Aorta (tissue), 5 donors: ENCODE measurements at regions of chr10 and their contacts with region 1.

Region 1: DNA sequence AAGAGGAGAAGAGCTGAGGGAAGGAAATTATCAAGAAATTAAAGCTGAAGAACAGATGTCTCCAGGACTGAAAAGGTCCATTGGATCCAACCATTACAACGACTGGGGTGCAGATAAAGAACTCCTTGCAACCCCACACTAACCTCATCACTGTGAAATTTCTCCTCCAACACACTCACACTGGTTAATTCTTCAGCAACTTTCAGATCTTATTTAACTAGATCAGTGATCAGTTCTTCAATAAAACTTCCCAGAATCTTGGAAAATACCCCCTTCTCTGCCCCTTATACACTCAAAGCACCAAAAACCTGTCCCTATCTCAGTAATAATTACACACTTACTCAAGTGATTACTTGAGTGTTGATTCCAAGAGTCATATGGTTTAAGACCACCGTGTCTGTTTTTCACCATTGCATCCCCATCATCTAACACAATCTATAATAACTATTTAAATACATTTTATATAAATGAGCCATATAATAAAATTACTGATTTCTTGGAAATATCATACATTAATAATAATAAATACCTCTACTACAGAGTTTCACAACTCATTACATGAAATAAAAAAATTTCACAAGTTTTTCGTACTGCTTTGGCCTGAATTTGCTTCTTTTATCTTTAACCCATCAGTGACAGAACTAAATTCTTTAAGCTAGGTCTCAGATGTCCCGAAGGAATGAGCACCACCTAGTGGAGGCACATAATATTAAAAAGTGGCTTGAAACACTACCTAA is 123.7 kb downstream of the MPP7 start:
- DNase-seq: no peak
- ATAC-seq: peak; percentile 84
- H3K4me3 ChIP-seq: no peak overlapping the region
- H3K27ac ChIP-seq: no peak overlapping the region
- H3K4me1 ChIP-seq: no peaks in the 10 kb centered on the region
- H3K27me3 ChIP-seq: no peaks in the 10 kb centered on the region

Region 2: DNA sequence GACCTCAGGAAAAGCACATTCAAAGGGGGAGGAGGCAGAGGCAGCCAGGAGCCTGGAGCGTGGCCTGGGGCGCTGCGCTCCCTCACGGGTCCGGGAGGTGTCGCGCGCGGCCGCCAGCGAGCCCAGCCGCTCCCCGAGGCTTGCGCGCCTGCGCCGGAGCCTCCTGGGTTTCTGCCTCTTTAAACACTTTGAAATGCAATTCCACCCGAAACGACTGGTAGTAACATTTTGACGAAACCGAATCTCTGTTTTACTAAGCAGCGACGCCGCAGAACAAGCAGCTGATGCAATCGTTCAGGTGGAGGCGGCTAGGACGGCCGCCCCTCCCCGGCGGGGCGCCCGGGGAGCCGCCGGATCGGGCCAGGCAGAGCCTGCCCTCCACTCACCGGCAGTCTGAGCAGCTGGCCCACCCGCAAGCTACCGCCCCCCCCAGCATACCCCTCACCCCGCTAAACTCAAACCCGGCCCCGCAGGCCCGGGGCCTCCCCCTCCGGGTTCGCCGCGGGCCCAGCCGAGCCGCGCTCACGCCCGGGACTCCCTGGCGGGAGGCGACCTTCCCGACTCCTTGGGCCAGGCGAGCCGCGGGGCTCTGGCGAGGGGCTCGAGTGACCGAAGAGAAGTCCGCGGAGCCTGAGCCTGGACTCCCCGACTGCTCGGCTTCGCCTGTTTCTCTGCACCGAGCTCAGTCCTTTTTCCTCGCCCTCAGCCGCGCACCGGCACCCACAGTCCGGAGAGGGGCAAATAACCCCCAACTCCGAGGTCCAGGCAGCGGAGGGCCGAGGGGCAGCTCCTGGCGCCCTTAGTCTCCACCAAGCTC is 436.8 kb before region 1 on chr10:
- intact Hi-C with region 1: loop called in 1 of 2 experiments (anchors 1 kb)
- DNase-seq: peak; percentile 86 to 94
- ATAC-seq: peak; percentile 90
- H3K4me3 ChIP-seq: peak overlapping the region; percentile 78 to 81
- H3K27ac ChIP-seq: peak overlapping the region; percentile 87 to 94
- H3K4me1 ChIP-seq: no peaks in the 10 kb centered on the region
- H3K27me3 ChIP-seq: no peaks in the 10 kb centered on the region

Region 3: GRCh38 chr10:27783660-27784059 is 395.5 kb before region 1 on chr10:
- intact Hi-C with region 1: loop called in 1 of 2 experiments (anchors 10 kb)
- DNase-seq: no peak
- ATAC-seq: peak; percentile 15
- H3K4me3 ChIP-seq: no peak overlapping the region
- H3K27ac ChIP-seq: no peak overlapping the region
- H3K4me1 ChIP-seq: peaks cover 3% of the 10 kb centered on the region in 2 donors
- H3K27me3 ChIP-seq: no peaks in the 10 kb centered on the region

Region 4: GRCh38 chr10:28054228-28054837 is 124.8 kb before region 1 on chr10:
- intact Hi-C with region 1: loop called in 1 of 2 experiments (anchors 10 kb)
- DNase-seq: no peak
- ATAC-seq: peak; percentile 64
- H3K4me3 ChIP-seq: no peak overlapping the region
- H3K27ac ChIP-seq: peak overlapping the region in 1 of 2 donors; percentile 50
- H3K4me1 ChIP-seq: peaks cover 0 to 2% of the 10 kb centered on the region in 2 donors
- H3K27me3 ChIP-seq: no peaks in the 10 kb centered on the region

Region 5: DNA sequence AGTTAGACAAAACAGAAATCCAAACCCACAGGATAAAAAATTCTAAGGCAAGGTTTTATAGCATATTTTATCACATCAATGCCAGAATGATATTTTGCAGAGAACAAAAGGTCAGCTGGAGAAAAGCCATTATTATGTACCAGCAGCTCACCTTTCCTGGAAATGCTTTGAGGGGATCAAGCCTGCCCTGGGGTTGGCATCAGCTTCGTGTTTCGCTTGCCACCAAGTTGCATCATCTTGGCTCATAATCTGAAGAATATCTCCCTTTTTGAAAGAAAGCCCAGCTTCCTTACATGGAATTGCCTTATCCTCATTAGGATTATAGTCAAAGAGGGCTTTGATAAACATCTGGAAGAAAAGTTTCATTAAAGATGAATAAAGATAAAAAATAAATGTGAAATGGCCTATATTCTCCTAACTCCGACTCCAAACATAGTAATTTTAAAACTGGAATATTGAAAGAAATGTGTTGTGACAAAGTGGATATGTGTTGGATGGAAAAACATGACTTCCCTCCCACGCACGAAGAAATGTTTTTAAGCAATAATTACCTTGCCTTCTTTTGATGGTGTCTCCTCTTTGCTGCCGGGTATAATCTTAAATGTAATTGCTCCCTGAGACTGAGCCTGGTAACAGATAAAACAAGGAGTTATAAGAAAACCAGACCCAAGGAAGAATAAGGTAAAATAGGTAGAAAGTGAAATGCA is 59.0 kb before region 1 on chr10:
- intact Hi-C with region 1: loop called in 1 of 2 experiments (anchors 10 kb)
- DNase-seq: no peak
- ATAC-seq: no peak
- H3K4me3 ChIP-seq: no peak overlapping the region
- H3K27ac ChIP-seq: no peak overlapping the region
- H3K4me1 ChIP-seq: peaks cover 0 to 2% of the 10 kb centered on the region in 2 donors
- H3K27me3 ChIP-seq: no peaks in the 10 kb centered on the region

Region 6: DNA sequence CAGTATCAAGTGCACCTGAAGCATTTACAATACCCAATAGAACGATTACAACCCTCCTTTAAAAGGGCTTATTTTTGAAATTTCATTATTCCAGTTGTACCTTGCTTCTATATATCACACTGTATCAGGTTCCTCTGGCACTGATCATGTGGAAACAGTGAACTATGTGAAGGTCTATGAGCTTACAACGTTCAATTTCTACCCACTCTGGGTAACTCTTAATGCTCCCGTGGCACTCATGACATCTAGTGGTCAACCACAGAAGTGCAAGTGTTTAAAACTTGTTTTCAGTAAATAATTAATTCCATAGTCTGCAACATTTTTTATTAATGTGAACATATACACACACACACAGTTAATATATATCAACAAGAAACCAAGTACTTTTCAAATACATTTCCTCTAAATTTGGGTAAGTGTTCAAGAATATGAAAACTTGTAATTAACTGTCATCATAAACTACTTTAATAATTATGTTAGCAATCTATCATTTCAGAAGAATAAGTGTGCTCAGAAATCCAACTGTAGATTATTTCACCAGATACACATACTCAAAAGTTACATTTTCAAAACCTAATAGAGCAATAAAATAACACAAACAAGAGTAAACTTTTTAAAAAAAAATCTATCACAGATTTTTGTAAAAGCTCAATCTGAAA is 62.7 kb after region 1 on chr10:
- intact Hi-C with region 1: loop called in 1 of 2 experiments (anchors 5 kb)
- DNase-seq: no peak
- ATAC-seq: peak; percentile 85
- H3K4me3 ChIP-seq: no peak overlapping the region
- H3K27ac ChIP-seq: no peak overlapping the region
- H3K4me1 ChIP-seq: no peaks in the 10 kb centered on the region
- H3K27me3 ChIP-seq: no peaks in the 10 kb centered on the region

Region 7: DNA sequence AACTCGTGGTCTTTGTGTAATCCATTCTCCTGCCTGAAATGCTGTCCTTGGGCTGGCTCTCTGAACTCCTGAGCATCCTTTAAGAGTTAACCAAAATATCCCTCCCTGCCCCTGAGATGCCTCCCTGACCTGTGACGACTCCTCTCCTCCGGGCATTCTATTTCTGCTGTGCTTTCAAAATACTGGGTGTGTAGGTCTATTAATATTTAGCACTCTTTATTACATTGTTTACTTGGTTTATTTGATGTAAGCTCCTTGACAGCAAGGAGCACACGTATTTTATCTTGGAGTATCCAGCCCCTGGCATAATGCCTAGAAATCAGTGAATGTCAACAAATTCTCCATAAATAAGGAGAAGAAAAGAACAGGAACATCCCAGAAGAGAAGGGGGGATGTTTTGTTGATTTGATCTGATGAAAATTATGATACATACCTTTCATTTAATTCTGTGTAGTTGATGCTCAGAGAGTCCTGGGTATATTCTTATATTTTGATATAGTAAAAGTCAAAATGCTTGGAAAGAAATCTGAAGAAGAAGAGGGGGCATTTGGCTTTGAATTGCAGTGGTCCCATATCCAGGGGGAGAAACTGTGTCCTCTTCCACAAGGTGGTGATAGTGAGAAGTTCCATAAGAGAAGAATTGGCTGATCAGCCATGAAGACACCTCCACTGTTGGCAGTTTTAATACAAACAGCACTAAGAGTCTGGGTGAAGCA is 231.4 kb after region 1 on chr10:
- intact Hi-C with region 1: no loop called
- DNase-seq: no peak
- ATAC-seq: no peak
- H3K4me3 ChIP-seq: no peak overlapping the region
- H3K27ac ChIP-seq: no peak overlapping the region
- H3K4me1 ChIP-seq: no peaks in the 10 kb centered on the region
- H3K27me3 ChIP-seq: no peaks in the 10 kb centered on the region